ENCODE measurements at regions of chr3 and their contacts with region 1.

Region 1: GRCh38 chr3:157618075-157618760 is 115.0 kb upstream of the VEPH1 start:
- DNase-seq: peak; percentile 63
- H3K4me3 ChIP-seq: no peak overlapping the region
- H3K27ac ChIP-seq: no peak overlapping the region
- H3K4me1 ChIP-seq: no peaks in the 10 kb centered on the region
- H3K27me3 ChIP-seq: peaks cover 12% of the 10 kb centered on the region
- CTCF ChIP-seq: peak; percentile 67

Region 2: DNA sequence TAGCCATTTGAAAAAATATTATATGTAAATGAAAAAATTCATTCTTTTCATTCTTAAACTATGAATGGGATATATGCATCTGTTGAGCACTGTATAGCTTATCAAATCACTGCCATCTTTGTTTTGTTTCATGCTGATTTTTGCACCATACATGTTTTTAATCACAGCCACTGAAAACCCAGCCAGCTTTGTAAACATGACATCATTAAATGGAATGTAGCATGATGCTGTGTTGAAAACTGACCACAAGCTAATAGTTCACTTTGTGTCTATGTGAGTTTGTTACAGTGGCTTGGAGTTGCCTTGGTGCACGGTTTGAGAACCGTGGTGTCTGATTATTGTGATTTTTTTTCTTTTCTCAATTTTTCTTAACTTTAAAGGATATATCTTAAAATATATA is 1672.0 kb before region 1 on chr3:
- CTCF ChIA-PET with region 1: no interaction called
- POLR2A ChIA-PET with region 1: no interaction called
- intact Hi-C with region 1: no loop called
- DNase-seq: no peak
- H3K4me3 ChIP-seq: no peak overlapping the region
- H3K27ac ChIP-seq: no peak overlapping the region
- H3K4me1 ChIP-seq: peaks cover 3% of the 10 kb centered on the region
- H3K27me3 ChIP-seq: no peaks in the 10 kb centered on the region
- CTCF ChIP-seq: no peak

Region 3: DNA sequence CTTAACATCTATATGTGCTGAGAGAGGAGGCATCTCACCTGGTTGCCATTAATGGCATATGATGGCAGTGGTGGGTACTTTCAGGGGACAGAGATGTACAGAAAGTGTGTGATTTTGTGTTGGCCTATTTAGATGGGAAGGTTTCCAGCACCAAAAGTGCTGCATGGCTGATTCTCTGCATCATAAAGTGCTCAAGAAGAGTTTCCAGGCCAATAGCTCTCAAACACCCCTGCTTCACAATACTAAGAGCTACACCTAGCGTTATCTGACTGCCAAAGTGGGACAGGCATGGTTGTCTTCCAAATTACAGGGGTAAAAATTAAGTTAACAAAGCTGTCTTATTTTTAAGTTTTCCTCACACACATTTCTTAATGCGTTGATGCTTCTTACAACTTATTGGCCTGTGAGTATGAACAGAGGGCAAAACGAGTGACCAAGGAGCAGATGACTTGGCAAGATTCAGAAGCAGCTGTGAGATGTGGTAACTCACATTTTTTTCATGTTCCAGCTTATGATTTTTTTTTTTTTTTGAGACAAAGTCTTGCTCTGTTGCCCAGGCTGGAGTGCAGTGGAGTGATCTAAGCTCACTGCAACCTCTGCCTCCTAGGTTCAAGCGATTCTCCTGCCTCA is 73.6 kb before region 1 on chr3:
- CTCF ChIA-PET with region 1: no interaction called
- POLR2A ChIA-PET with region 1: no interaction called
- intact Hi-C with region 1: no loop called
- DNase-seq: no peak
- H3K4me3 ChIP-seq: no peak overlapping the region
- H3K27ac ChIP-seq: no peak overlapping the region
- H3K4me1 ChIP-seq: no peaks in the 10 kb centered on the region
- H3K27me3 ChIP-seq: peaks cover 16% of the 10 kb centered on the region
- CTCF ChIP-seq: no peak

Region 4: GRCh38 chr3:157865352-157866000 is 247.3 kb after region 1 on chr3:
- CTCF ChIA-PET with region 1: no interaction called
- POLR2A ChIA-PET with region 1: no interaction called
- intact Hi-C with region 1: loop called (anchors 5 kb)
- DNase-seq: peak; percentile 59
- H3K4me3 ChIP-seq: no peak overlapping the region
- H3K27ac ChIP-seq: no peak overlapping the region
- H3K4me1 ChIP-seq: no peaks in the 10 kb centered on the region
- H3K27me3 ChIP-seq: no peaks in the 10 kb centered on the region
- CTCF ChIP-seq: peak; percentile 89

Region 5: DNA sequence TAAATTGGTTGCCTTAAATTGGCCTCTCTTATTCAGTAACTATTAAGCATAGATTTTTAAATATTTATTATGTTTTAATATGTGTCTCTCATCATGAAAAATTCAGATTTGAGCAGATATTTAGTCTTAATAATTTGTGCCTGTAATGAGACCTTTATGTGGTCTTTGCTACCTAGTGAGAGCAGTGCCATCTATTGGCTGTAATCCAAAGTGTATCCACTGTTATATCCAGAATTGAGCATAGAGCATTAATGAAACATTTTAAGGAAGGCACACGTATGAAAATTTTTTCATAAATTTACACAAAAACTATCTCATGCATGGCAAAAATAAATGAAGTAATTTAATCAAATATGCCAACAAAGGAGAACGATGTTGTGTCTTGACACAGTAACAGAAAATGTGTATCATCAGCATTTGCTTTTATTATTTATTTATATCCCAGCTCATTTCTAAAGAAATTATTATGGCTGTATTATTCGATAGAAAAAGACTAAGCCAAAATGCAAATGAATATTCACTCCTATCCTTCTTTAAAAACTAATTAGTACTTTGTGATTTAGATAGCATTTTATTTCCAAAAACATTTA is 695.2 kb after region 1 on chr3:
- CTCF ChIA-PET with region 1: no interaction called
- POLR2A ChIA-PET with region 1: no interaction called
- intact Hi-C with region 1: loop called (anchors 5 kb)
- DNase-seq: peak; percentile 64
- H3K4me3 ChIP-seq: no peak overlapping the region
- H3K27ac ChIP-seq: no peak overlapping the region
- H3K4me1 ChIP-seq: no peaks in the 10 kb centered on the region
- H3K27me3 ChIP-seq: no peaks in the 10 kb centered on the region
- CTCF ChIP-seq: peak; percentile 71

Region 6: DNA sequence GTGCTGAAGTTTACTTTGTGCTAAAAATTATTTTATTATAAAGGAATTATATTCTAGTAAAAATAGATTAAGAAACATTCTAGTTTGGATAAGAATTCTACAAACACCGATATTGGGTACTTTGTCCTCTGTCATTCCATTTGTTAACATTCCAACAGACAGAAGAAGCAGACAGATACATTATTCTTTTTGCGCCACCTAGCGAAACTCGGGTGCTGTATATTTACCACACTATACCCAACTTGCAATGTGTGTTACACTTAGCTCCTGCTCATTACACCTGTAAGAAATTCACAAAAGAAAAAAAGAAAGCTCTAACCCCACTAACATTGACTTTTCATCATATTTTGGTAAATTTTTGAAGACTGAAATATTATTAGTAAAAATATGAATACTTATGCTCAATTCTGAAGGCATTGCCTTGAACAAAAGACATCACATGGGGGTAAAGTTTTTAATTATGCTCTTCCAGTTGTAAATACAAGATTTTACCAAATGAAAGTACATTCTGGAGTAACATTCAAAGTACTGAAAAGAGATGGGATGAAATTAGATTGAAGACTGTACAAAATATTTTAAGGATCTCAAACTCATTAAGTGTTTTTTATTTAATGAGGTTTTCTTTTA is 816.3 kb after region 1 on chr3:
- CTCF ChIA-PET with region 1: no interaction called
- POLR2A ChIA-PET with region 1: no interaction called
- intact Hi-C with region 1: loop called (anchors 2 kb)
- DNase-seq: peak; percentile 80
- H3K4me3 ChIP-seq: no peak overlapping the region
- H3K27ac ChIP-seq: no peak overlapping the region
- H3K4me1 ChIP-seq: peaks cover 11% of the 10 kb centered on the region
- H3K27me3 ChIP-seq: no peaks in the 10 kb centered on the region
- CTCF ChIP-seq: peak; percentile 82

Region 7: DNA sequence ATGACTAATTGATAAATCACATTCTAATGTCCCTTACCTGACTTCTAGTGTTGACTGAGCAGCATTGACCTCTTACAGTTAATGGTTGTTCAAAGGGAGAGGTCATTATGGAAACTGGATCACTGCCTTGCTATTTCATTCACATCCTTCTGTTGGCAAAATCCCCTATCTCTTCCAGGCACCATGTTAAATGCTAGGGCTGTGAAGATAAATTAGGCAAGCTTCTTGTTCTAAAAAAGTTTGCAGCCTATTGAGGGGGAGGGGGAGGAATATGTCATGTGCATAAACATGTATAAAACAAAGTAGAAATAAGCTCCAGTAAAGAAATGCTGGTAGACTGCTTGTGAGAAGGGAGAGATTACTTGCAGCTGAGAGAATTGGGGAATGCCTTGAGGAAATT is 868.0 kb after region 1 on chr3:
- CTCF ChIA-PET with region 1: interaction called, 11 read pairs
- POLR2A ChIA-PET with region 1: no interaction called
- intact Hi-C with region 1: no loop called
- DNase-seq: no peak
- H3K4me3 ChIP-seq: no peak overlapping the region
- H3K27ac ChIP-seq: no peak overlapping the region
- H3K4me1 ChIP-seq: peaks cover 21% of the 10 kb centered on the region
- H3K27me3 ChIP-seq: no peaks in the 10 kb centered on the region
- CTCF ChIP-seq: no peak

Region 8: DNA sequence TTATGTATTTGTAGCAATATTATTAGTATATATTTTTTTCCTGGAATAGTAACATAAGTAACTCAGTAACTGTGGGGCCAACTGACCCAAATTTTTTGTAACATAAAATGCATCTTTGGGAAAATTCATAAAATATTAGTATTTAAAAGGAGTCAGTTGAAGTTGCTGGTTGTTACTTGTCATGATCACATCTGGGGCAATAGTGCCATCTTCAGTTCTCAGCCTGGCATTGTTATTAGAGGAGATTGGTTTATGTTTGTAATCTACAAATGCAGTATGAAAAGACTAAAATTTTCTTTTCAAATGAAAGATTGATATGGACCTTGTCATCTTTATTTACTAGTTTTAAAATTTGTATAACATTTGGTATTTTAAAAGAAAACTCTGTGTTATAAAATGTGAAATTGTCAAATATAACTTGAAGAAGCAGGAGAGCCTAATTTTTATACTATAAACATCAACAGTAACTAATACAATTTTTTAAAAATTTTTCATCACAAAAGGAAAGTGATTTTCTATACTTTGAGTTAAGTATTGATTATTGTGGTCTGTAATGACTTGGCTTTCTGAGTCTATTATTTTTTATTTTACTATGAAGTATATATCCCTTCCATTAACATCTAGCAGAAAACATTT is 914.0 kb after region 1 on chr3:
- CTCF ChIA-PET with region 1: no interaction called
- POLR2A ChIA-PET with region 1: no interaction called
- intact Hi-C with region 1: loop called (anchors 2 kb)
- DNase-seq: peak; percentile 63
- H3K4me3 ChIP-seq: no peak overlapping the region
- H3K27ac ChIP-seq: no peak overlapping the region
- H3K4me1 ChIP-seq: peaks cover 4% of the 10 kb centered on the region
- H3K27me3 ChIP-seq: no peaks in the 10 kb centered on the region
- CTCF ChIP-seq: peak; percentile 77